ENCODE measurements at regions of chr4 and their contacts with region 1.

Region 1: GRCh38 chr4:182786991-182787390 is 130.2 kb downstream of the DCTD start:
- DNase-seq: no peak
- ATAC-seq: no peak
- H3K4me3 ChIP-seq: no peak overlapping the region
- H3K27ac ChIP-seq: no peak overlapping the region
- H3K4me1 ChIP-seq: no peaks in the 10 kb centered on the region
- H3K27me3 ChIP-seq: no peaks in the 10 kb centered on the region
- CTCF ChIP-seq: no peak

Region 2: DNA sequence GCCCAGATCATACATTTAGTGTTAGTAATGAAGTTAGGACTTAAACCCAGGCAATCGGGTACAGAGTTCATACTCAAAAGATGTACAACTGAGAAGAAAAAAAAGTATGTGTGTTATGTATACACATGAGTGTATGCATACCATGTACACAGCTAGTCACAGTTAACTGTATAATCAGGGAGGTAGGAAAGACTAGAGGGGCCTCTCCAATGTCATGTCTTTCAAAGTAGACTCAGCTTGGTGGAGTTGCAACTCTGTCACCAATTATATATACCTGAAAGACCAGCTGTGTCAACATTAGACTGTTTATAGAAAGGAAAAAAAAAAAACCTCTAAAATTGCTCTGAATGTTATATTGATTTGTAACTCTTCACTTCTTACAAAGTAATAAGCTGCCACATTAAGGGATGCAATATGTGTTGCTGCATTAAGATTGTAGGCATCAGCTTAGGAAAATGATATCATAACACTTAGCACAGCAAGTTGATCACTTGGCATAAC is 37.3 kb before region 1 on chr4:
- CTCF ChIA-PET with region 1: no interaction called
- POLR2A ChIA-PET with region 1: interaction called, 10 read pairs
- in situ Hi-C with region 1: no loop called
- intact Hi-C with region 1: no loop called
- DNase-seq: peak; percentile 7
- ATAC-seq: no peak
- H3K4me3 ChIP-seq: no peak overlapping the region
- H3K27ac ChIP-seq: no peak overlapping the region
- H3K4me1 ChIP-seq: no peaks in the 10 kb centered on the region
- H3K27me3 ChIP-seq: no peaks in the 10 kb centered on the region
- CTCF ChIP-seq: no peak